Mammary epithelial cell (primary cell): ENCODE measurements at regions of chr22 and their contacts with region 1.

Region 1: DNA sequence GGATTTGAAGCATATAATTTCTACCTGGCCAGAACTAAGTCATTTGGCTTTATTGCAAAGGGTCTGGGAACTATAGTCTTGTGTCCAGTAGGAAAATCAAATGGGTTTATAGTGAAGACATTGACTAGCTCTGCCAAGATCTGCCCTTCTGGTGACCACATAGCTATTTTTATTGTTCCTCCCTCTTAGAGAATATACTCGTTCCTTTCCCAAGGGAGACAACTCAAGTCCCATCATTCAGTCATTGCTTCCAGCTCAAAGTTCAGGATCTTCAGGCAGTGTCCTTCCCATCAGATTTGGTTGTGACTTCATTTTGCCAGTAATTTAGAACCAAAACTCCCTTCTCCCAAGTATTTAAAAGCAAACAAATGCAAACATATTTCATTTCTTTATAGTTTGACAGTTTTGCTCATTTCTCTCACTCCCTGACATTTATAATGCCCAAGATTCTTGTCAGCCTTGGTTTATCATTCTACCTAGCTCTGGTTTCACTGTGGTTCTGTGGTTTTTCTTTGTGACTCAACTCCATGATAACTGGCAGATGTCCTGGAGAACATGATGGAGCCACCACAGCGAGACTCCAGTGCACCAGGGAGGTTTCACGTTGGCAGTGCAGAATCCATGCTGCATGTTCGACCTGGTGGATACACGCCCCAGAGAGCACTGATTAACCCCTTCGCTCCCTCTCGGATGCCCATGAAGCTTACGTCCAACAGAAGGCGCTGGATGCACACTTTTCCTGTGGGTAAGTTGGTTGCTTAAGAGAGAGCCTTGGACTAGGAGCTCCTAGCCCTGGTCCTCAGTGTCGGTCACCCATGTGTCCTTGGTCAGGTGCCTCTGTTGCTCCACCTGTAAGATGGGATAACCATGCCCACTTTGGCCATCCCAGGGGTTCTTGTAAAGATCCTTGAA is 64.9 kb downstream of the DEPDC5 start:
- DNase-seq: peak; percentile 63
- H3K4me3 ChIP-seq: no peak overlapping the region
- H3K27ac ChIP-seq: no peak overlapping the region
- H3K4me1 ChIP-seq: no peaks in the 10 kb centered on the region
- H3K27me3 ChIP-seq: no peaks in the 10 kb centered on the region
- CTCF ChIP-seq: no peak

Region 2: DNA sequence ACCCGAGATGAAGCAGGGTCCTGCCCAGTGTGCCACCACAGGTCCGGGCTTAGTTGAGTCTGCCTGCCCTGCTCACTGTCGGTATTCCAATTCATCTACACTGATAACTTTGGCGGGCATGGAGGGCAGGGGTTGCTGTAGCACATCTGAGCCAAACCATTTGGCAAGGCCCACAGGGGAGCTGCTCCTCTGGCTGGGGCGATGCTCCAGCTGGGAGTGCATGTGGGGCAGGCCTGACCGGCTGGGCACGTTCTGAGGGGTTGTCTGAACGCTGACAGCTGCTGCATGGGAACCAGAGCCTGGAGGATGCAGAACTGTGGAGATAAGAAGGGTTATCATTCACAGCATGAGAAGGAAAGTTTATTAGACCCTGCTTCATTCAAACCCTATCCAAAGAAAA is 378.9 kb before region 1 on chr22:
- CTCF ChIA-PET with region 1: no interaction called
- dilution Hi-C with region 1: no loop called
- in situ Hi-C with region 1: no loop called
- intact Hi-C with region 1: no loop called
- DNase-seq: no peak
- H3K4me3 ChIP-seq: no peak overlapping the region
- H3K27ac ChIP-seq: no peak overlapping the region
- H3K4me1 ChIP-seq: peaks cover 10% of the 10 kb centered on the region
- H3K27me3 ChIP-seq: no peaks in the 10 kb centered on the region
- CTCF ChIP-seq: no peak

Region 3: DNA sequence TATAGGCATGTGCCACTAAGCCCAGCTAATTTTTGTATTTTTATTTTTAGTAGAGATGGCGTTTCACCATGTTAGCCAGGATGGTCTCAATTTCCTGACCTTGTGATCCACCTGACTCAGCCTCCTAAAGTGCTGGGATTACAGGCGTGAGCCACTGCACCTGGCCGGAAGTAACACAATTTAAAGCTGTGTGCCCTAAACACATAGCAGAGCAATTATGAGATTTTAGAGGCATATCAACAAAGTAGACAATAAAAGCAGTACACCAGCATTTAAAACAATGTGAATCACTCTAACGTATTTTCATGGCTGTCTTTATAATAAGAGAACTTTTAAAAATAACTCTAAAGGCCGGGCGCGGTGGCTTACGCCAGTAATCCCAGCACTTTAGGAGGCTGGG is 111.2 kb before region 1 on chr22:
- CTCF ChIA-PET with region 1: no interaction called
- dilution Hi-C with region 1: no loop called
- in situ Hi-C with region 1: no loop called
- intact Hi-C with region 1: no loop called
- DNase-seq: no peak
- H3K4me3 ChIP-seq: no peak overlapping the region
- H3K27ac ChIP-seq: no peak overlapping the region
- H3K4me1 ChIP-seq: no peaks in the 10 kb centered on the region
- H3K27me3 ChIP-seq: no peaks in the 10 kb centered on the region
- CTCF ChIP-seq: no peak

Region 4: GRCh38 chr22:31773416-31773815 is 45.3 kb before region 1 on chr22:
- CTCF ChIA-PET with region 1: no interaction called
- dilution Hi-C with region 1: loop called (anchors 5 kb)
- in situ Hi-C with region 1: no loop called
- intact Hi-C with region 1: no loop called
- DNase-seq: no peak
- H3K4me3 ChIP-seq: no peak overlapping the region
- H3K27ac ChIP-seq: no peak overlapping the region
- H3K4me1 ChIP-seq: no peaks in the 10 kb centered on the region
- H3K27me3 ChIP-seq: no peaks in the 10 kb centered on the region
- CTCF ChIP-seq: no peak

Region 5: DNA sequence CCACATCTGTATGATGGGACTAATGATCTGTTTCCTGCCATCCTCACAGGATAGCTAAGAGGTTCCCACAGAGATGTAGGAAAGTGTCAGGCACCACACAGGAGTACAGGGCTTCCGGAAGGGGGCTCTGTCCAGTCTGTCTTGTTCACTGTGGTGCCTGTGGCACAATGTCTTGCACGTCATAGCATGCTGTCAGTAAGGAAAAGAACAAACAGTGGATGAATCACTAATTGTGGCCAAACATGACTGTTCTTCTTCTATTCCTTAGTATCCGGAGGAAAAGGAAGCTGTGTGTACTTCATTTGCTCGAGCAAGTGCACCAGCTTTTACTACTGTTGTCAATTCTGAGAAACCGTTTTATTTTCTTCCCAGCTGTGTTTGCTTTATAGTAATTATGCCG is 52.2 kb after region 1 on chr22:
- CTCF ChIA-PET with region 1: no interaction called
- dilution Hi-C with region 1: loop called (anchors 5 kb)
- in situ Hi-C with region 1: no loop called
- intact Hi-C with region 1: no loop called
- DNase-seq: peak; percentile 93
- H3K4me3 ChIP-seq: no peak overlapping the region
- H3K27ac ChIP-seq: peak overlapping the region; percentile 59
- H3K4me1 ChIP-seq: peaks cover 27% of the 10 kb centered on the region
- H3K27me3 ChIP-seq: no peaks in the 10 kb centered on the region
- CTCF ChIP-seq: peak in 1 of 2 donors; percentile 63

Region 6: GRCh38 chr22:31906569-31906968 is 87.8 kb after region 1 on chr22:
- CTCF ChIA-PET with region 1: no interaction called
- dilution Hi-C with region 1: loop called (anchors 5 kb)
- in situ Hi-C with region 1: no loop called
- intact Hi-C with region 1: no loop called
- DNase-seq: no peak
- H3K4me3 ChIP-seq: no peak overlapping the region
- H3K27ac ChIP-seq: no peak overlapping the region
- H3K4me1 ChIP-seq: no peaks in the 10 kb centered on the region
- H3K27me3 ChIP-seq: no peaks in the 10 kb centered on the region
- CTCF ChIP-seq: no peak